ENCODE measurements at regions of chr2 and their contacts with region 1.

Region 1: DNA sequence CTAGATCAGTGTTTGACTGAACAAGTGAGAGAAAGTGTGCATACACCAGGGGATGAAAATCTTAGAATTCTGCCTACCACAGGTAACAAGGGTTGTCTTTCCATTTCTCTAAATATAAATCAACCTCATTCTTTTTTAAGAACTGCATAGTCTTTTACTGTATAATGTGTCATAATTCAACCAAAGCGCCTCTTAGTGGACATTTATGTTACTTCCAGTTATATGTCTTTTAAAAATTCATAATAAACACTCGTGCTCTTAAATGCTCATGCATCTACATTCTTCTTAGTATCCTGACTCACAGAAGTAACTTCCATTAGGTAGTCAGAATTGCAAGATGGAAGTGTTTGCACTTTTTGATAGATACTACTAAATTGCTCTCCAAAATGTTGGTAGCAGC is 76.2 kb downstream of the CHRNA1 start:
- DNase-seq: no peak
- ATAC-seq: peak; percentile 41
- H3K4me3 Mint-ChIP-seq: no peak overlapping the region
- H3K27ac Mint-ChIP-seq: no peak overlapping the region
- H3K4me1 Mint-ChIP-seq: peaks cover 11% of the 10 kb centered on the region
- H3K27me3 Mint-ChIP-seq: peaks cover 3% of the 10 kb centered on the region
- CTCF ChIP-seq: peak; percentile 55

Region 2: GRCh38 chr2:174610243-174610995 is 77.7 kb before region 1 on chr2:
- CTCF ChIA-PET with region 1: interaction called, 34 read pairs
- POLR2A ChIA-PET with region 1: interaction called, 6 read pairs
- intact Hi-C with region 1: loop called (anchors 1 kb)
- DNase-seq: no peak
- ATAC-seq: no peak
- H3K4me3 Mint-ChIP-seq: peak overlapping the region; percentile 47
- H3K27ac Mint-ChIP-seq: peak overlapping the region; percentile 95
- H3K4me1 Mint-ChIP-seq: peaks cover 94% of the 10 kb centered on the region
- H3K27me3 Mint-ChIP-seq: no peaks in the 10 kb centered on the region
- CTCF ChIP-seq: no peak

Region 3: GRCh38 chr2:174643356-174643755 is 44.7 kb before region 1 on chr2:
- CTCF ChIA-PET with region 1: no interaction called
- POLR2A ChIA-PET with region 1: no interaction called
- intact Hi-C with region 1: no loop called
- DNase-seq: no peak
- ATAC-seq: no peak
- H3K4me3 Mint-ChIP-seq: no peak overlapping the region
- H3K27ac Mint-ChIP-seq: no peak overlapping the region
- H3K4me1 Mint-ChIP-seq: no peaks in the 10 kb centered on the region
- H3K27me3 Mint-ChIP-seq: no peaks in the 10 kb centered on the region
- CTCF ChIP-seq: no peak

Measured in activated B cell treated with CpG ODN at 0.5 μM for 24 hours (primary cell).